ENCODE measurements at regions of chr1 and their contacts with region 1.

Region 1: DNA sequence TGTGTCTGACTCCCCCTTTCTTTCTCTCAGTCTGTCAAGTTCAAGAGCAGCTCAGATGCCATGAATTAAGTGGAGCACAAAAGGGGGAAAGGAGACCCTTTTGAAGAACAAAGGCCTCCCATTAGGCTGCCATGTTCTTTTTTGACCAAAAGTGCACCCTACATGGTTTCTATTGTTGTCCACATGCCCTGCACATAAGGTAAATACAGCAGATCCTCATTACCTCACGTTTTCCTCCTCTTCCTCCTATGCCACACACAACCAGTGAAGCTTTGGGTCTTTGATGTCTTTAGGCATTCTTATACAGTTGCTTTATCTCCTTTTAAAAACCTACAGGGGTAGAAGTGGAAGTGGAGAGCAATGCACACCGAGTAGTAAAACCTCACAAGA is 47.7 kb downstream of the POU2F1 start:
- DNase-seq: no peak
- H3K4me3 ChIP-seq: no peak overlapping the region
- H3K27ac ChIP-seq: no peak overlapping the region
- H3K4me1 ChIP-seq: peaks cover 0 to 52% (median 4%) of the 10 kb centered on the region in 4 donors
- H3K27me3 ChIP-seq: no peaks in the 10 kb centered on the region
- CTCF ChIP-seq: no peak

Region 2: GRCh38 chr1:167442124-167442848 is 173.9 kb after region 1 on chr1:
- intact Hi-C with region 1: loop called (anchors 5 kb)
- DNase-seq: peak; percentile 85 to 88
- H3K4me3 ChIP-seq: no peak overlapping the region
- H3K27ac ChIP-seq: no peak overlapping the region
- H3K4me1 ChIP-seq: peaks cover 0 to 11% (median 9%) of the 10 kb centered on the region in 4 donors
- H3K27me3 ChIP-seq: peaks cover 0 to 15% of the 10 kb centered on the region in 2 donors
- CTCF ChIP-seq: peak; percentile 78 to 85

Region 3: GRCh38 chr1:167454894-167455785 is 186.7 kb after region 1 on chr1:
- intact Hi-C with region 1: no loop called
- DNase-seq: peak; percentile 65 to 82
- H3K4me3 ChIP-seq: peak overlapping the region; percentile 66 to 92
- H3K27ac ChIP-seq: peak overlapping the region; percentile 90 to 94
- H3K4me1 ChIP-seq: peaks cover 0 to 13% (median 3%) of the 10 kb centered on the region in 4 donors
- H3K27me3 ChIP-seq: no peaks in the 10 kb centered on the region
- CTCF ChIP-seq: no peak